ENCODE measurements at regions of chr7 and their contacts with region 1.

Region 1: DNA sequence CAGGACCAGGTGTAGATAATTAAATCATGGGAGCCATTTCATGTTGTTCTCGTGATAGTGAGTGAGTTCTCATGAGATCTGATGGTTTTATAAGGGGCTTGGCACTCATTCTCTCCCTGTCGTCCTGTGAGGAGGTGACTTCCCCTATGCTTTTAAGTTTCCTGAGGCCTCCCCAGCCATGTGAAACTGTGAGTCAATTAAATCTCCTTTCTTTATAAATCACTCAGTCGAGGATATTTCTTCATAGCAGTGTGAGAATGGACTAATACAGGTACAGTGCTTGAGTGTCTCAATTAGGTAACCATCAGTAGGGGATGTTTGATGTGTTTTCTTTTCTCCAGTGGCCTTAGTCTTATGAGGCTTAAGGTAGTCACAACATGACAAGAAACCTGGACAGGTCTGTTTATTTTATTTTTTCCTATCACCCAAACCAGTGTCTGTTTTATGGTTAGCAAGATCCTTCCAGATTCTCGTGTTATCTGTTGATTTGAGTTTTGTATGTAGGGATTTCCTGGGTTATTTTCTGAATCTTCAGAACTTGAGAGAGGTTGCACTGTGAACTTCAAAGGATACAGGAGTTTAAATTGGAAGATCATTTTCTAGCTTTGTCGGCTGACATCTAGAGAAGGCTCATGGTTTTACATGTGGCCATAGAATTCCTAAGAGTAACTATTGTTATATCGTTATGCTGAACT is 32.1 kb downstream of the UMAD1 start:
- DNase-seq: peak; percentile 64
- H3K4me3 Mint-ChIP-seq: peak overlapping the region; percentile 31
- H3K27ac Mint-ChIP-seq: peak overlapping the region; percentile 79
- H3K4me1 Mint-ChIP-seq: peaks cover 45% of the 10 kb centered on the region
- H3K27me3 Mint-ChIP-seq: no peaks in the 10 kb centered on the region

Region 2: DNA sequence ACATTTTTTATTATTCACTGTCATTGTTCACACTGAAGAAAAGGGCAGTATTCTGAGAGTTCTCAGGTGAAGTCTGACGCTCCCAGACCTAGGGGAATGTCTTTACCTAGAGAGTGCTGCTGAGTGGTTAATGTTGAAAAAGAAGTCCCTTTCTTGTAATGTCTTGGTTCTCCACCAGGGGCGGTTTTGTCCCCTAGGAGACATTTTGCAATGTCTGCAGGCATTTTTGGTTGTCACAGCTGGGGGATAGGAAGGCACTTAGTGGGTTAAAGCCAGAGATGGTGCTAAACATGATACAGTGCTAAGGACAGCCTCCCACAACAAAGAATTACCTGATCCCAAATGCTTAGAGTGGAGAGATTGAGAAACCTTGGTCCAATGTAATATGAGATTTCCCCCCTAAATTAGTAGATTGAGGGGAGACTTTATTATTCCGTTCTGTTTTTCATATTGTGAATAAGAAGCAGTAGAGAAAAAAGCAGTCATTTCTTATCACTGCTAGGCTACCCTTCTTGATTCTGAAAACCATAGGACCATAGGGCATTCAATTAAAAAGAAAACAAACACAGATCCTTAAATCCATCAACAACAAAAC is 19.0 kb before region 1 on chr7:
- CTCF ChIA-PET with region 1: interaction called, 4 read pairs
- intact Hi-C with region 1: loop called (anchors 2 kb)
- DNase-seq: peak; percentile 49
- H3K4me3 Mint-ChIP-seq: no peak overlapping the region
- H3K27ac Mint-ChIP-seq: no peak overlapping the region
- H3K4me1 Mint-ChIP-seq: peaks cover 37% of the 10 kb centered on the region
- H3K27me3 Mint-ChIP-seq: no peaks in the 10 kb centered on the region

Region 3: DNA sequence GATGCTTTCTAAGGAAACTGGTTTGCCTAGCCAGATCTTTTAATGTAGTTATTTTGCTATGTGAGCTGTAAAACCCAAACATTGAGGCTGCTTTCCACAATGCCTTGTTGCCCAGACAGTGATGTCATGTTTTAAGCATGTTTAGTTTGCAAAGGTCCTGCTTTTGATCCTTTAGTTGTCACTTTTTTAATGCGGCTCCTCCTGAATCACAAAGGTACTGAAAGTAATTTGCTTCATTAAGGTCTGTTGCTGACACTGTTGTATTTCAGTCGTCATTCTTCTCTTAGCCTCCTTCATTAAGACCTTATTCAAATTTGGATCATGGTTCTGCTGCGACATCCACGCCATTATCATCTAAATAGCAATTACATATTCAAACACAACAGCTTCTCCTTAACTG is 35.1 kb after region 1 on chr7:
- CTCF ChIA-PET with region 1: no interaction called
- intact Hi-C with region 1: no loop called
- DNase-seq: no peak
- H3K4me3 Mint-ChIP-seq: no peak overlapping the region
- H3K27ac Mint-ChIP-seq: no peak overlapping the region
- H3K4me1 Mint-ChIP-seq: peaks cover 22% of the 10 kb centered on the region
- H3K27me3 Mint-ChIP-seq: no peaks in the 10 kb centered on the region

Region 4: GRCh38 chr7:8125680-8126444 is 453.2 kb after region 1 on chr7:
- CTCF ChIA-PET with region 1: no interaction called
- intact Hi-C with region 1: loop called (anchors 2 kb)
- DNase-seq: peak; percentile 86
- H3K4me3 Mint-ChIP-seq: peak overlapping the region; percentile 71
- H3K27ac Mint-ChIP-seq: peak overlapping the region; percentile 96
- H3K4me1 Mint-ChIP-seq: peaks cover 57% of the 10 kb centered on the region
- H3K27me3 Mint-ChIP-seq: no peaks in the 10 kb centered on the region